Endothelial cell of umbilical vein (primary cell): ENCODE measurements at regions of chr9 and their contacts with region 1.

Region 1: GRCh38 chr9:25678162-25678666 is at the start of gene TUSC1:
- DNase-seq: peak; percentile 83
- H3K4me3 ChIP-seq: peak within 1 kb of the TSS; percentile 40 to 70 (median 68)
- H3K27ac ChIP-seq: peak within 1 kb of the TSS; percentile 67
- H3K4me1 ChIP-seq: peaks cover 18% of the 10 kb centered on the region
- H3K27me3 ChIP-seq: no peaks in the 10 kb centered on the region
- CTCF ChIP-seq: no peak
- POLR2A ChIP-seq: no peak
- total RNA-seq, gene TUSC1: 12.1 TPM in 2 replicates

Region 2: GRCh38 chr9:25658571-25658970 is 19.6 kb before region 1 on chr9:
- CTCF ChIA-PET with region 1: interaction called, 3 read pairs
- POLR2A ChIA-PET with region 1: no interaction called
- dilution Hi-C with region 1: no loop called
- intact Hi-C with region 1: loop called (anchors 2 kb)
- DNase-seq: no peak
- H3K4me3 ChIP-seq: no peak overlapping the region
- H3K27ac ChIP-seq: no peak overlapping the region
- H3K4me1 ChIP-seq: no peaks in the 10 kb centered on the region
- H3K27me3 ChIP-seq: no peaks in the 10 kb centered on the region
- CTCF ChIP-seq: no peak
- POLR2A ChIP-seq: no peak

Region 3: DNA sequence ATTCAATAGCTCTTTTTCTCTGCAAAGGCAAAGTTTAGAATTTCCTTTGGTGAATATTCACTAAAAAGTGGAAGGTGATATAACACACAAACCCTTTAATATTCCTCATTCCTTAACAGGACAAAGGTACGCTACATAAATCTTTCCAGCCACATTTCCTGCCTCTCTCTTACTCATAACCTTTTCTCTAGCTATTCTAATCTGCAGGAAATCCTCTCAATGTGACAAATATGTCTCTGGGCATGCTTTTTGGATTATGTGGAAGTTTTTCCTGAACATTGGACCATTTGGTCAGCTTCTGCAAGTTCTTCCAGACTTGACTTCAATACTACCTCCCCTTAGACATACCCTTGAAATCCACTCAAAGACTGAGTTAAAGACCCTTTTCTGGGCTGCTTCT is 186.3 kb after region 1 on chr9:
- CTCF ChIA-PET with region 1: no interaction called
- POLR2A ChIA-PET with region 1: no interaction called
- dilution Hi-C with region 1: no loop called
- intact Hi-C with region 1: loop called (anchors 1 kb)
- DNase-seq: peak; percentile 90
- H3K4me3 ChIP-seq: peak overlapping the region in 1 of 3 experiments; percentile 6
- H3K27ac ChIP-seq: peak overlapping the region; percentile 87
- H3K4me1 ChIP-seq: peaks cover 24% of the 10 kb centered on the region
- H3K27me3 ChIP-seq: no peaks in the 10 kb centered on the region
- CTCF ChIP-seq: no peak
- POLR2A ChIP-seq: peak; percentile 41